Heart right ventricle (tissue), 16 donors: ENCODE measurements at regions of chr13 and their contacts with region 1.

Region 1: DNA sequence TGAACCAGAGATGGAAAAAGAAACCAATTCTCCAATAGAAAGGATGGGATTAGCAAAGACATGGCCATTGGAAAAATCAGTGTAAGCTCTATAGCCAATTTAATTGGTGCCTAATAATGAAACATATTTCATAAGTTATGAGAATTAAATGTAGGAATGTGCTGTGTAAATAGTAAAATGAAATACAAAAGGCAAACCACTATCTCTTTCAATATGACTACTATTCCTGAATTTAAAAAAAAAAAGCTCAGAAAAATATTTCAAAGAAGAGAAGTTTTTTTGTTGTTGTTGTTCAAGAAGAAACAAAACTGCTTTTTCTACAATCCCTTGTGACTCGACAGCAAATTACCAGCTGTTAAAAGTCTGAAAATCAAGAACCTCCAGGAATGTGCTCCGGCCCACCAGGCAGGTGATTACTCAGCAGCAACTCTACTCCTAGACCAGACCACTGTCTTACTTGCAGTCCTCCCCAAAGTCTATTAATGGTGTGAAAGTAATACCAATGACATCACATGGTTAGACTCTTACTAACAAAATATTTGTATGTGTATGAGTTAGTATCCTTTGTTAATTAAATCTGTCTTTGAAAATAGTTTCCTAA is 362.4 kb downstream of the KCTD12 start:
- DNase-seq: no peak
- ATAC-seq: peak in 1 of 8 donors; percentile 19
- H3K4me3 ChIP-seq: no peak overlapping the region
- H3K27ac ChIP-seq: no peak overlapping the region
- H3K4me1 ChIP-seq: peaks cover 0 to 4% (median 0%) of the 10 kb centered on the region in 9 donors
- H3K27me3 ChIP-seq: no peaks in the 10 kb centered on the region
- CTCF ChIP-seq: no peak

Region 2: DNA sequence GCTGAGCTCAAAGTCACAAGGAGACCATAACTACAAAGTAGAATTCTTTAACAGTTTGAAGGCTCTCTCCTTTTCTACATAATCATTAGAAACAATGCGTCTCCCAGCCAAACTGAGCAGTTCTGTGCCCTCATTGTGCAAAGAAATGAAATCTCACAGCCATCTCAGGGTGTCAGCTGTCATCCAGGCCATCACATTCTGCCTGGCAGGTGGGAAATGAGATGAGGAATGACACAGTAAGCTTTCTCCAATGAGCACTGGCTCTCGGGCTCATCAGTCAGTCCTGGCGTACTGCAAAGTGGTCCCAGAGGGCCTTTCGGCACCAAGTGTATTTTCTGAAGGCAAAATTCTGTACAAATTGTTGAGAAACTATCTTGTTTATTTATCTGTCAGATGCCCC is 55.9 kb after region 1 on chr13:
- intact Hi-C with region 1: loop called in 1 of 10 experiments (anchors 10 kb)
- DNase-seq: no peak
- ATAC-seq: no peak
- H3K4me3 ChIP-seq: no peak overlapping the region
- H3K27ac ChIP-seq: no peak overlapping the region
- H3K4me1 ChIP-seq: no peaks in the 10 kb centered on the region
- H3K27me3 ChIP-seq: no peaks in the 10 kb centered on the region
- CTCF ChIP-seq: no peak

Region 3: GRCh38 chr13:76600081-76600480 is 76.2 kb after region 1 on chr13:
- intact Hi-C with region 1: no loop called
- DNase-seq: no peak
- ATAC-seq: no peak
- H3K4me3 ChIP-seq: no peak overlapping the region
- H3K27ac ChIP-seq: no peak overlapping the region
- H3K4me1 ChIP-seq: peaks cover 0 to 11% (median 0%) of the 10 kb centered on the region in 9 donors
- H3K27me3 ChIP-seq: no peaks in the 10 kb centered on the region
- CTCF ChIP-seq: no peak

Region 4: DNA sequence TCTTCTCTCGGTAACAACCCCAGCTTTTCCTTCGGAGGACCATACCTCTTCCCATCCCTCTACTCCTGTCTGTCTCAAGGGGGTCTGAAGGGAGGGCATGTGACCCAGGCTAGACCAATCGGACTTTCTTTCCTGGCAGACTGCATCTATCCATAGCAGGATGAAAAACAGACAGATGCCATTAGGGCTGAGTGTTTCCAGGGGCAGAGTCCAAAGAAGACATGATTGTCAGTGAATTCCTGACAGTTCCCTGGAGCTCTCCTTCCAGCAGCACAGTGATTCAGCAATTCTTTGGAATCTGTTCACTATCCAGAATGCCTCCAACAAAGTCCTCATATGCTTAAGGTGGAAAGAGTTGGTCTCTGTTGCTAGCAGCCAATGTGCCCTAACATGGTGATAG is 172.5 kb after region 1 on chr13:
- intact Hi-C with region 1: no loop called
- DNase-seq: no peak
- ATAC-seq: peak in 2 of 8 donors; percentile 14 to 34
- H3K4me3 ChIP-seq: no peak overlapping the region
- H3K27ac ChIP-seq: no peak overlapping the region
- H3K4me1 ChIP-seq: peaks cover 0 to 8% (median 0%) of the 10 kb centered on the region in 9 donors
- H3K27me3 ChIP-seq: no peaks in the 10 kb centered on the region
- CTCF ChIP-seq: no peak